RWPE1 (cell line): ENCODE measurements at regions of chr12 and their contacts with region 1.

Region 1: DNA sequence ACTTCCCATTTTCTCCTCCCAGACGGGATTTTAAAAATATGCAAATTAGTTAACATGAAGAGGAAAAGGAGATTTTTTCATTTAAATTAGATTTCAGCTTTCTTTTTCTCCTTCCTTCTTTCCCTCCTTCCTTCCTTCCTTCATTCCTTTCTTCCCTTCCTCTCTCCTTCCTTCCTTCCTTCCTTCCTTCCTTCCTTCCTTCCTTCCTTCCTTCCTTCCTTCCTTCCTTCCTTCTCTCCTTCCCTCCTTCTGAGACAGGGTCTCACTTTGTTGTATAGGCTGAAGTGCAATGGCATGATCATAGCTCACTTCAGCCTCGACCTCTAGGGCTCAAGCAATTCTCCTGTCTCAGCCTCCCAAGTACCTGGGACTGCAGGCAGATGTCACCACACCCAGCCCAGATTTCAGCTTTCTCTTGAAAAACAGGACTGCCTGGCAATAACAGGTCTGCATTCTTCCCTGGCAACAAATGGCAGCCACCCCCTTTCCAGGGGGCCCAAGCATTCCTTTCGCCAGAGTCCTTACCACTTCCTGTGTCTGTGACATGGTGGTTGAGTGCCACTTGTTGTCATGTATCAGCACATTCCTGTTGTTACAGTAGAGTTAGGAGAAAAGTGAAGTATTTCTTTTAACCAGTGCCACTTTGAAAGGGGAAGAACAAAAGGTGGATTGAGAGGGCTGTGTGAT is 119.1 kb downstream of the PTPN11 start:
- DNase-seq: no peak
- H3K27ac ChIP-seq: no peak overlapping the region
- CTCF ChIP-seq: no peak

Region 2: DNA sequence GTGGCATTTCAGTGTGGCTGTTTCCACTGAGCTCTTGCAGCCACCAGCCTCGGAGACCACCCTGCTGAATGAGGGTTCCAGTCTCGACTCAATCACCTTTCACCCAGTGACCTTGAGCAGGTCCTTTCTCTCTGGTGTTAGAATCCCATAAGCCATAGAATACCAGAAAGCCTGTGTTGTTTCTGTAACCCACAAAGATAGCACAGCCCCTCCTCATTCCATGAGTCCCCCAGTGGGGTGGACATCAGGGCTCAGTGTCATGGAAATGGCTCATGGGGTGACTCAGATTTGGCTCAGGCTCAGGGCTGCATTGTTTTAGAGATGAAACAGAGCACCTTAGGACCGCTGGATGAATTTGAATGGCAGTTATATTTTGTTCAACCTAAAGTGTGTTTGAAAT is 52.4 kb after region 1 on chr12:
- CTCF ChIA-PET with region 1: interaction called, 10 read pairs
- POLR2A ChIA-PET with region 1: no interaction called
- DNase-seq: peak; percentile 8
- H3K27ac ChIP-seq: no peak overlapping the region
- CTCF ChIP-seq: no peak

Region 3: DNA sequence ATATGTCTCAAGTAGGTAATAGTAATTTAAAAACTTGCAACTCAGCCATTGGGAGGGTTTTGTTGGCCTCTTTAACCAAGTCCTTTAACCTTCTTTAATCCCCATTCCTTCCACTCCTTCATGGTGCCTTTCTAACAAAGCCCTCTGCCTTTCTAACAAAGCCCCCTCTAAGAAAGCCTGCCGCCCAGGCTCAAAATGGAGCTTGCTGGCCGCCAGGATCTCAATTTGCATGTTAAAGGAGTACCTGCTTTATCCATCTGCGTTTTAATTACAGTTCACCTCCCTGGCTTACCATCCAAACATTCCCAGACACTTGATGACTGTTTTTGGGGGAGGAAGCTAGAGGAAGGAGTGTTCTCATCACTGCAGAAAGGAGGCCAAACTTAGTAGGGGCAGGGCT is 64.3 kb after region 1 on chr12:
- CTCF ChIA-PET with region 1: no interaction called
- POLR2A ChIA-PET with region 1: no interaction called
- DNase-seq: no peak
- H3K27ac ChIP-seq: no peak overlapping the region
- CTCF ChIP-seq: no peak

Region 4: DNA sequence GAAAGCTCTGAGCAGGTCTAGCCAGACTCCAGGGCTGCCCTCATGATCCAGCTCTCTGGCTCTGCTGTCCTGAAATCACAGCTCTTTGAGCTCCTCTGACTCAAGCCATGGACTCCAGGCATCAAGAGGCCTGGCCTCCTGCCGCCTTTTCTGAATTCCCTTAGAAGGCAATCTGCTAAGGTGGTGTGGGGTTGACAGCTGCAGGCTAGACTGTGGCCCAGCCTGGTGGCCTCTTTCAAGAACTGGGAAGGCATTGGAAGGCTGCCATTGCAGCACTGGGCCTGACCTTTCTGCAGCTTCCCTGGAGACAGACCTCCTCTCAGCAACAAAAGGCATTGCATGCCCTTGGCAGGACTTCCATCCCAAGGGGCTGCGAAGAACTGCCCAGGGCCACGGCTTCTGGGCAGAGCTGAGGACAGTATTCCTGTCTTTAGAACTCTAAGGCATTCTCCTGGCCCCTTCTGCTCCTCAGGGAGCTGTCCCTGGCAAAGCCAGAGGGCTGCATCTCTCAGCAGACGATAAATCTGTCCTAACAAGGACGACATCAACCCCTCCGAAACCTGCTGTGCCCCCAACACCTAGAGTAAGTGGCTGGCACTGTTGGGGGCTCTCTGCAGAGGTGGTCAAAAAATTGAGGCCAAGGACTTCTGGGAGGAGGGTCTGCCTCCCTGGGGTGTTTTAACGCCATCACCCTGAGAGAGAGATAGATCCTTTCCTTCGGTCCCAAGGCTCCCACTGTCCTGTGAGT is 1312.6 kb after region 1 on chr12:
- CTCF ChIA-PET with region 1: no interaction called
- POLR2A ChIA-PET with region 1: no interaction called
- DNase-seq: no peak
- H3K27ac ChIP-seq: no peak overlapping the region
- CTCF ChIP-seq: no peak